Calu3 (cell line): ENCODE measurements at regions of chr14 and their contacts with region 1.

Region 1: DNA sequence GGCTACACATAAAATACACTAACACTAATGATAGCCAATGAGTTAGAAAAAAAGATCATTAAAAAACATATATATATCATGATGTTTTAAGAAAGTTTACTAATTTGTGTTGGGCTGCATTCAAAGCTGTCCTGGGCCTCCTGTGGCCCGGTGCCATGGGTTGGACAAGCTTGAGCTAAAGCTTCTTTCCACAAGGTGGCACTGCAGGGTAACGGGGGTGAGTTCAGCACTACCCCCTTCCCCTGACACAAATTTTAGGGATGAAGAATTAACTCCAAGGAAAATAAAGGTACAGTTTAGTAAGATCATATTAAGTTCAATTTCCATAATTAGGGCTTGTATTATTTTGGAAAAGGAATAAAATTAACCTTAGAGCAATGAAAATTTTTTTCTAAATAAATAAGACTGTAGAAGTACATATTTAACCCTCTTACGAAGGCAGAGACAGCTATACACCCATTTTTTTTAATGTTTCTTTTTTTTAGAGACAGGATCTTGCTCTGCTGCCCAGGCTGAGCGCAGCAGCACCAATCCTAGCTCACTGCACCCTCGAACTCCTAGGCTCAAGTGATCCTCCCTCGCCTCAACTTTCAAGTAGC is 38.9 kb downstream of the PPP1R13B start:
- DNase-seq: peak; percentile 86
- H3K4me3 Mint-ChIP-seq: no peak overlapping the region
- H3K27ac Mint-ChIP-seq: no peak overlapping the region
- H3K4me1 Mint-ChIP-seq: no peaks in the 10 kb centered on the region
- H3K27me3 Mint-ChIP-seq: no peaks in the 10 kb centered on the region
- CTCF ChIP-seq: peak; percentile 72

Region 2: GRCh38 chr14:103641181-103641580 is 167.3 kb before region 1 on chr14:
- CTCF ChIA-PET with region 1: no interaction called
- intact Hi-C with region 1: no loop called
- DNase-seq: no peak
- H3K4me3 Mint-ChIP-seq: no peak overlapping the region
- H3K27ac Mint-ChIP-seq: no peak overlapping the region
- H3K4me1 Mint-ChIP-seq: no peaks in the 10 kb centered on the region
- H3K27me3 Mint-ChIP-seq: no peaks in the 10 kb centered on the region
- CTCF ChIP-seq: no peak

Region 3: GRCh38 chr14:103825101-103825500 is 16.6 kb after region 1 on chr14:
- CTCF ChIA-PET with region 1: interaction called, 15 read pairs
- intact Hi-C with region 1: no loop called
- DNase-seq: peak; percentile 24
- H3K4me3 Mint-ChIP-seq: peak overlapping the region; percentile 44
- H3K27ac Mint-ChIP-seq: peak overlapping the region; percentile 56
- H3K4me1 Mint-ChIP-seq: peaks cover 34% of the 10 kb centered on the region
- H3K27me3 Mint-ChIP-seq: no peaks in the 10 kb centered on the region
- CTCF ChIP-seq: no peak

Region 4: DNA sequence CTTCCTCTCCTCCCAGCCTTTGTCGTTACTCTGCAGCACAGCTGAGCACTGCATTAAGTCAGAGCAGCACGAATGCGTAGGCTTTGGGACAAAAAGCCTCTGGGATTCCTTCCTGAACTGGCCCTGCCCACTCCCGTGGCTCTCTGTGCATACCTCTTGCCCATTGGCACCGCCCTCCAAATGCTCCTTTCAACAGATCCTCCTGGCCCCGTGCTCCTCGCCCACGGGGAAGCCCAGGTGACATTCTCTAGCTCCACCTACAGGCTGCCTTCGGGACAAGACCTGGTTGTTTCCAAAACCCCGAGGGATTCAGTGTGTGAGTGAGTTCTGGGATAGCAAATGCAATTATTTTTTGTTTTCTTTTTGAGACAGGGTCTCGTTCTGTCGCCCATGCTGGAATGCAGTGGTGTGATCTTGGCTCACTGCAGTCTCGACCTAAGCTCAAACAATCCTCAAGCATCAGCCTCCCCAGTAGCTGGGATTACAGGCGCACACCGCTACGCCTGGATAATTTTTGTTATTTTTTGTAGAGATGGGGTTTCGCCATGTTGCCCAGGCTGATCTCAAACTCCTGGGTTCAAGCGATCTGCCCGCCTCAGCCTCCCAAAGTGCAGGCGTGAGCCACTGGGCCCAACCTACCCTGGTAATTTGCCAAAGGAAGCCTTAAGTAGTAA is 101.9 kb after region 1 on chr14:
- CTCF ChIA-PET with region 1: interaction called, 23 read pairs
- intact Hi-C with region 1: loop called (anchors 1 kb)
- DNase-seq: peak; percentile 92
- H3K4me3 Mint-ChIP-seq: peak overlapping the region; percentile 20
- H3K27ac Mint-ChIP-seq: no peak overlapping the region
- H3K4me1 Mint-ChIP-seq: peaks cover 9% of the 10 kb centered on the region
- H3K27me3 Mint-ChIP-seq: no peaks in the 10 kb centered on the region
- CTCF ChIP-seq: peak; percentile 80

Region 5: DNA sequence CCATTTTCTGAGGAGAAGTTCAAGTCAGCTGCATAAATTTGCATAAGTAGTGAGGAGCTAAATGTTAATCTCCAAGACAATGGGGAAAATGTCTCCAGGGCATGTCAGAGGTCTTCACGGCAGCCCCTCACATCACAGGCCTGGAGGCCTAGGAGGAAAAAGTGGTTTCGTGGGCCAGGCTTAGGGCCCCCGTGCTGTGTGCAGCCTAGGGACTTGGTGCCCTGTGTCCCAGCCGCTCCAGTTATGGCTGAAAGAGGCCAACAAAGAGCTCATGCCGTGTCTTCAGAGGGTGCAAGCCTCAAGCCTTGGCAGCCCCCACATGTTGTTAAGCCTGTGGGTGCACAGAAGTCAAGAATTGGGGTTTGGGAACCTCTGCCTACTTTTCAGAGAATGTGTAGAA is 175.7 kb after region 1 on chr14:
- CTCF ChIA-PET with region 1: interaction called, 11 read pairs
- intact Hi-C with region 1: loop called (anchors 1 kb)
- DNase-seq: no peak
- H3K4me3 Mint-ChIP-seq: no peak overlapping the region
- H3K27ac Mint-ChIP-seq: no peak overlapping the region
- H3K4me1 Mint-ChIP-seq: peaks cover 7% of the 10 kb centered on the region
- H3K27me3 Mint-ChIP-seq: peaks cover 49% of the 10 kb centered on the region
- CTCF ChIP-seq: no peak

Region 6: GRCh38 chr14:104054222-104054905 is 245.9 kb after region 1 on chr14:
- CTCF ChIA-PET with region 1: no interaction called
- intact Hi-C with region 1: no loop called
- DNase-seq: no peak
- H3K4me3 Mint-ChIP-seq: no peak overlapping the region
- H3K27ac Mint-ChIP-seq: no peak overlapping the region
- H3K4me1 Mint-ChIP-seq: no peaks in the 10 kb centered on the region
- H3K27me3 Mint-ChIP-seq: peaks cover 74% of the 10 kb centered on the region
- CTCF ChIP-seq: no peak